Right cardiac atrium (tissue), 5 donors: ENCODE measurements at regions of chr19 and their contacts with region 1.

Region 1: GRCh38 chr19:41934849-41935374 is 6.7 kb upstream of the ERFL start:
- DNase-seq: peak; percentile 59 to 81 (median 78)
- ATAC-seq: peak; percentile 57 to 63
- H3K4me3 ChIP-seq: no peak overlapping the region
- H3K27ac ChIP-seq: no peak overlapping the region
- H3K4me1 ChIP-seq: no peaks in the 10 kb centered on the region
- H3K27me3 ChIP-seq: no peaks in the 10 kb centered on the region

Region 2: DNA sequence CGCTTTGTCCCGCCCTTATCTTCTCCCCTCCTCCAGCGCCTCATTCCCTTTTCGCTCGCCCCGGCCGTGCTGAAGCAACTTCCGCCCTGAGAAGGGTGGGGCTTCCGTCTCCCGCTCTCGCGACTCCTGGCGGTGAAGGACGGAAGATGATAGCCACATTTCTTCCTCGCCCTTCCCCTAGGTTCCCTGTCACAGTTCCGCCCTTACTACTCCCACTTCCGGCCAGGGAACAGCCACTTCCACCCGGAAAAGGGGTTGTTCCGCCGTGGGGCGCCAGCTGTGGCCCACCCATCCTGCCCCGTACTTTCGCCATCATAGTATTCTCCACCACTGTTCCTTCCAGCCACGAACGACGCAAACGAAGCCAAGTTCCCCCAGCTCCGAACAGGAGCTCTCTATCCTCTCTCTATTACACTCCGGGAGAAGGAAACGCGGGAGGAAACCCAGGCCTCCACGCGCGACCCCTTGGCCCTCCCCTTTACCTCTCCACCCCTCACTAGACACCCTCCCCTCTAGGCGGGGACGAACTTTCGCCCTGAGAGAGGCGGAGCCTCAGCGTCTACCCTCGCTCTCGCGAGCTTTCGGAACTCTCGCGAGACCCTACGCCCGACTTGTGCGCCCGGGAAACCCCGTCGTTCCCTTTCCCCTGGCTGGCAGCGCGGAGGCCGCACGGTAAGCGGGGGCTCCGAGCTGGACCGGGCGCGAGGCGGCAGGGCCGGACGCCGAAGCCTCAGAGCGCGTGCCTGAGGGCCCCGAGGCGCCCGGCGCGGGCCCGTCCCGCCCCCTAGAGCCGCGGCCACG is 75.1 kb before region 1 on chr19 and contains the start of gene RPS19:
- intact Hi-C with region 1: no loop called
- DNase-seq: peak; percentile 98 to 99 (median 99)
- ATAC-seq: peak; percentile 96
- H3K4me3 ChIP-seq: peak within 1 kb of the TSS; percentile 77
- H3K27ac ChIP-seq: peak within 1 kb of the TSS; percentile 87
- H3K4me1 ChIP-seq: peaks cover 10% of the 10 kb centered on the region
- H3K27me3 ChIP-seq: no peaks in the 10 kb centered on the region
- total RNA-seq, gene RPS19: 625 to 784 (median 741) TPM

Region 3: DNA sequence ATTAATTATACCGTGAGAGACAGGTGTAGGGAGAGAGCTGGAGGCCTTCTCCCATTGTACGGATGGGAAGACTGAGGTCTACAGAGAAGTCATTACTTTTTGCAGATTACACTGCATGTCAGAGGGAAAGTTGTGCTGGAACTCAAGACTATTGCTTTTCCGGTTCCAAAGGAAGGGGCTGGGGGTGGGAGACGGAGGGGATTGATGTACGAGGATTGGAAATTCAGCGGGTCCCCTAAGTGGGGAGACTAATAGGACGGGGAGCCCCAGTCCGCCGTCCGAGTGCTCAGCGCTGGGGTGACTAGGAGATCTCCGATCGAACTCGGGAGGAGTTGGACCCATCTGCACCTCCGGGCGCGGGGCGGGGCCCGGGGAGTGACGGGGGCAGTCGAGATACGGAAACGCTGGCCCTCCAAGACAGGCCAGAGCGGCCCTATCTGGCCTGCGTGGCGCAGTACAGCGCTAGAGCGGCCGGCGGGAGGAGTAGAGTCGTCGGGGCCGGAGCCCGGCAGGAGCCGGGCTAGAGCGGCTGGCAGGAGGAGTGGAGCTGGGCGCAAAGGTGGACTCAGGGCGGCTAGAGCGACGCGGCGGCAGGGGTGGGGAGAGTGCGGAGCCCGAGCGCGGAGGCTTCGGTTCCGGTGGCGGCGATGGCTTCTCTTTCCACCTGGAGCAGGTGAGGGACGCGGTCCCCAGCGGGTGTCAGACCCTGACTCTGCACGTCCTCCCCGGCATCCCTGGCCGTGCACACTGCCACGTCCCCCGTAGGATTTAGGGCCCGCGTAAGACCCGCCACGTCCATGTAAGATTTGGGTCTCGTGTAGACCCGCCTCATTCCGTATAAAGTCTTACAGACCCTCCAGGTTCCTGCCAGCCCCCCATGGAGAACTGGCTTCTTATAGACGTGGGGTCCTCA is 50.8 kb before region 1 on chr19:
- intact Hi-C with region 1: loop called in 1 of 4 experiments (anchors 10 kb)
- DNase-seq: peak; percentile 96 to 98 (median 98)
- ATAC-seq: peak; percentile 96 to 97
- H3K4me3 ChIP-seq: peak overlapping the region; percentile 85
- H3K27ac ChIP-seq: peak overlapping the region; percentile 46
- H3K4me1 ChIP-seq: no peaks in the 10 kb centered on the region
- H3K27me3 ChIP-seq: no peaks in the 10 kb centered on the region